ENCODE measurements at regions of chr15 and their contacts with region 1.

Region 1: GRCh38 chr15:40782580-40783227 is 12.9 kb downstream of the C15orf62 start:
- DNase-seq: peak; percentile 69 to 85 (median 71)
- H3K4me3 ChIP-seq: no peak overlapping the region
- H3K4me3 Mint-ChIP-seq: no peak overlapping the region
- H3K27ac ChIP-seq: no peak overlapping the region
- H3K27ac Mint-ChIP-seq: peak overlapping the region in 4 of 8 donors; percentile 6 to 87 (median 40)
- H3K4me1 ChIP-seq: peaks cover 12% of the 10 kb centered on the region
- H3K4me1 Mint-ChIP-seq: peaks cover 14 to 24% (median 19%) of the 10 kb centered on the region in 3 donors
- H3K27me3 ChIP-seq: no peaks in the 10 kb centered on the region
- H3K27me3 Mint-ChIP-seq: peaks cover 0 to 2% of the 10 kb centered on the region in 2 donors

Region 2: DNA sequence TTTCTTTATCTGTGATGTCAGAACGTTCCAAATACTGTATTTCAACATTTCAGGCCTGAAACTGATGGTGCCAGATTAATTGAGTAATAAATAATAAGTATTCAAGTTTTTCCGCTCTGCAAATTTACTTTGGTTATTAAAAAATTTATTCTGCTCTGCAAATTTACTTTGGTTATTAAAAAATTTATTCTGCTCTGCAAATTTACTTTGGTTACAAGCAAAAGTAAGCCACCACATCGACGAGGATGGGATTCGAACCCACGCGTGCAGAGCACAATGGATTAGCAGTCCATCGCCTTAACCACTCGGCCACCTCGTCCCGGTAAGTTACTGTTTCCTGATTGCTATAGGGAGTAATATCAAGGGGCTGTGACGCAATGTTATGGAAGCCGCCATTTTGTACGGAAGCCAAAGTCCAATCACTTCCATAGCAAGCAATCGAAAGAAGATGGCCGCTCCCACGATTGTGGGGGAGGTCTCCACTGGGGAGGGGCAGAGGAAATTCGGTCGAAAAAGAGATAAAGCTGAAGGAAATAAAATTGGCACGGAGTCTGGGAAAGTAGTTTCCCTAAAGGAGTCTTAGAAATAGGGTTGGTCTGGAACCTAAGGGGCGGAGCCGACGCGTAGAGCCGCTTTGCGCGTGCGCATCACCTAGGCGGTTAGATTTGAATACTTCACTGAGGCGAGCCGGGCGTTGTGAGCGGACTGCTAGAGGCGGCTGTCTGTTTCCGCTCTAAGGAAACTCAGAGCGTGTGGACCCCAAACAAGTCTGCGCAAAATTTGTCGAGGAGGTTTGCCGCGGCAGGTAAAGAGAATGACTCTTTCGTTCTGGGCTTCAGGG is 188.9 kb before region 1 on chr15 and contains the start of gene KNL1:
- CTCF ChIA-PET with region 1: interaction called, 16 read pairs
- POLR2A ChIA-PET with region 1: no interaction called
- DNase-seq: peak; percentile 81 to 92 (median 89)
- H3K4me3 ChIP-seq: peak within 1 kb of the TSS; percentile 84
- H3K4me3 Mint-ChIP-seq: peak within 1 kb of the TSS; percentile 93 to 97 (median 95)
- H3K27ac ChIP-seq: peak within 1 kb of the TSS; percentile 90
- H3K27ac Mint-ChIP-seq: peak within 1 kb of the TSS; percentile 95 to 100 (median 98)
- H3K4me1 ChIP-seq: peaks cover 8% of the 10 kb centered on the region
- H3K4me1 Mint-ChIP-seq: peaks cover 33 to 41% (median 37%) of the 10 kb centered on the region in 3 donors
- H3K27me3 ChIP-seq: no peaks in the 10 kb centered on the region
- H3K27me3 Mint-ChIP-seq: peaks cover 2 to 7% of the 10 kb centered on the region in 2 donors
- total RNA-seq, gene KNL1: 19.2 to 19.5 TPM

Region 3: GRCh38 chr15:40684381-40684780 is 98.3 kb before region 1 on chr15:
- CTCF ChIA-PET with region 1: interaction called, 65 read pairs
- POLR2A ChIA-PET with region 1: no interaction called
- DNase-seq: no peak
- H3K4me3 ChIP-seq: no peak overlapping the region
- H3K4me3 Mint-ChIP-seq: no peak overlapping the region
- H3K27ac ChIP-seq: no peak overlapping the region
- H3K27ac Mint-ChIP-seq: peak overlapping the region in 1 of 8 donors; percentile 68
- H3K4me1 ChIP-seq: no peaks in the 10 kb centered on the region
- H3K4me1 Mint-ChIP-seq: peaks cover 0 to under 1% (median 0%) of the 10 kb centered on the region in 3 donors
- H3K27me3 ChIP-seq: no peaks in the 10 kb centered on the region
- H3K27me3 Mint-ChIP-seq: no peaks in the 10 kb centered on the region

Region 4: DNA sequence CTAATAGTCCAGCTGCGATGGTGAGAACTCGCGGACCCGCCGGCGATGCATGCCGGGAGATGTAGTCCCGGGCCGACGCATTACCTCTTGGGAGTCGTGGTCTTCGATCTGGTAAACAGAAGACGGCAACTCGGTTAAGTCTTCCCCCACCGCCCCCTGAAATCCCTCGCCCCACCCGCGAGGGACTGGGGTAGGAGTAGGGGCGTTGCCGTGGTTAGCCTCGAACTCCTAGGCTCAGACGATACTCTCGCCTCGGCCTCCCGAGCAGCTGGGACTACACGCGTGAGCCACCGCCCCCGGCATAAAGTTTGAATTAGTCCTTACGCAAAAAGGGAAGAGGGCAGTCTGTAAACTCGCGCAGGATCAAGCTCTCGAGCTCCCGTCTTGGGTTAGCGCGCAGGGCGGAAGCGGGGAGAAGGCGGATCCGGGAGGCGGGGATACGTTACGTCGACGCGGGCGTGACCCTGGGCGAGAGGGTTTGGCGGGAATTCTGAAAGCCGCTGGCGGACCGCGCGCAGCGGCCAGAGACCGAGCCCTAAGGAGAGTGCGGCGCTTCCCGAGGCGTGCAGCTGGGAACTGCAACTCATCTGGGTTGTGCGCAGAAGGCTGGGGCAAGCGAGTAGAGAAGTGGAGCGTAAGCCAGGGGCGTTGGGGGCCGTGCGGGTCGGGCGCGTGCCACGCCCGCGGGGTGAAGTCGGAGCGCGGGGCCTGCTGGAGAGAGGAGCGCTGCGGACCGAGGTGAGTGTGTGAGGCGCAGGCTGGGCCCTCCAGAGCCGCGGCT is 87.8 kb before region 1 on chr15 and contains the start of gene RAD51:
- CTCF ChIA-PET with region 1: interaction called, 14 read pairs
- POLR2A ChIA-PET with region 1: interaction called, 3 read pairs
- DNase-seq: peak; percentile 86 to 94 (median 90)
- H3K4me3 ChIP-seq: peak within 1 kb of the TSS; percentile 96
- H3K4me3 Mint-ChIP-seq: peak within 1 kb of the TSS; percentile 92 to 99 (median 96)
- H3K27ac ChIP-seq: peak within 1 kb of the TSS; percentile 98
- H3K27ac Mint-ChIP-seq: peak within 1 kb of the TSS; percentile 91 to 99 (median 98)
- H3K4me1 ChIP-seq: peaks cover 8% of the 10 kb centered on the region
- H3K4me1 Mint-ChIP-seq: peaks cover 19 to 28% (median 20%) of the 10 kb centered on the region in 3 donors
- H3K27me3 ChIP-seq: no peaks in the 10 kb centered on the region
- H3K27me3 Mint-ChIP-seq: no peaks in the 10 kb centered on the region
- total RNA-seq, gene RAD51: 54.3 to 57.6 TPM

Region 5: GRCh38 chr15:40751745-40752144 is 31.0 kb before region 1 on chr15:
- CTCF ChIA-PET with region 1: interaction called, 11 read pairs
- POLR2A ChIA-PET with region 1: interaction called, 6 read pairs
- DNase-seq: no peak
- H3K4me3 ChIP-seq: no peak overlapping the region
- H3K4me3 Mint-ChIP-seq: peak overlapping the region in 1 of 7 donors; percentile 56
- H3K27ac ChIP-seq: peak overlapping the region; percentile 27
- H3K27ac Mint-ChIP-seq: peak overlapping the region in 1 of 8 donors; percentile 89
- H3K4me1 ChIP-seq: peaks cover 15% of the 10 kb centered on the region
- H3K4me1 Mint-ChIP-seq: peaks cover 19 to 34% (median 33%) of the 10 kb centered on the region in 3 donors
- H3K27me3 ChIP-seq: no peaks in the 10 kb centered on the region
- H3K27me3 Mint-ChIP-seq: no peaks in the 10 kb centered on the region

Region 6: DNA sequence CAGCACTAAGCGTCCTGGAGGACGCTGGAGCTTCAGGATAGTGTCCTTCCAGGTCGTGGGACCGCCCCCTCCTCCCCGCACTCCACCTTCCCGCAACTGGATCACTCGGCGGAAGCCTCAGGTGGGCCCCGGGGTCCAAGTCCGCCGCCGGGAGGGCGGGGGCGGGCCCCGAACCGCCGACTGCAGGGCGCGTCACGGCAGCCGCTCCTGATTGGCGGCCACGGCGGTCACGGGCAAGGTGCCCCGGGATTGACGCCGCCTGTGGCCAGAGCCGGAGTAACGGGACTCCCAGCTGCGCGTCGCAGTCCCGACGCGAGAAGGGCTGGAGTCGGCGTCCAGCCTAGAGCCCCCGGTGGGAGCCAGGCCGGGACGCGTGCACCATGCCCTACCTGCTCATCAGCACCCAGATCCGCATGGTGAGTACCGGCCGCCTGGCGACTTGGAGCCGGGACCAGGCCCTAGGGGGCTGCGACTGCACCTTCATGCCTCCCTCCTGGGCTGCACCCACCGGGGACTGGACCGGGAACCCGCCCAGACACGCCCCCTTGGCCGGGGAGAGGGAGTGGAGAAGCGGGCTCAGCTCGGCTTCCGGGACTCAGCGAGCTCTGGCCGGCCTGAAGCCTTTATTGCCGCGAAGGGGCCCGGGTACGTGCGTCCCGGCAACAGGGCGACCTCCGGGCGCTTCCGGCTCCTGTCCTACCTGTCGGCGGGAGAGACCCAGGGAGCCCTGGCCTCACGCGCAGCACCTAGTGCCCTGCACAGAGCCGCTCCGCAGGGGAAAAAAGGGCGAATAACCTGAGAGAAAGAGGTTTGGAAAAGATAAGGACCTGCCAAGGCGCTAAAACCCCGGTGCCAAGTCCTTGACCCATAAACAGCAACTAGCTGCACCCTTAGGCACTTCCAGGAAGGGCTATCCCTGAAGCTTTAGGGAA is 18.6 kb before region 1 on chr15 and contains the start of gene GCHFR:
- CTCF ChIA-PET with region 1: interaction called, 45 read pairs
- POLR2A ChIA-PET with region 1: interaction called, 3 read pairs
- DNase-seq: peak; percentile 61 to 80 (median 66)
- H3K4me3 ChIP-seq: peak within 1 kb of the TSS; percentile 74
- H3K4me3 Mint-ChIP-seq: peak within 1 kb of the TSS; percentile 86 to 95 (median 90)
- H3K27ac ChIP-seq: peak within 1 kb of the TSS; percentile 66
- H3K27ac Mint-ChIP-seq: peak within 1 kb of the TSS; percentile 80 to 98 (median 96)
- H3K4me1 ChIP-seq: peaks cover 32% of the 10 kb centered on the region
- H3K4me1 Mint-ChIP-seq: peaks cover 21 to 44% (median 28%) of the 10 kb centered on the region in 3 donors
- H3K27me3 ChIP-seq: no peaks in the 10 kb centered on the region
- H3K27me3 Mint-ChIP-seq: no peaks in the 10 kb centered on the region
- total RNA-seq, gene GCHFR: 19.5 to 21.5 TPM

Region 7: DNA sequence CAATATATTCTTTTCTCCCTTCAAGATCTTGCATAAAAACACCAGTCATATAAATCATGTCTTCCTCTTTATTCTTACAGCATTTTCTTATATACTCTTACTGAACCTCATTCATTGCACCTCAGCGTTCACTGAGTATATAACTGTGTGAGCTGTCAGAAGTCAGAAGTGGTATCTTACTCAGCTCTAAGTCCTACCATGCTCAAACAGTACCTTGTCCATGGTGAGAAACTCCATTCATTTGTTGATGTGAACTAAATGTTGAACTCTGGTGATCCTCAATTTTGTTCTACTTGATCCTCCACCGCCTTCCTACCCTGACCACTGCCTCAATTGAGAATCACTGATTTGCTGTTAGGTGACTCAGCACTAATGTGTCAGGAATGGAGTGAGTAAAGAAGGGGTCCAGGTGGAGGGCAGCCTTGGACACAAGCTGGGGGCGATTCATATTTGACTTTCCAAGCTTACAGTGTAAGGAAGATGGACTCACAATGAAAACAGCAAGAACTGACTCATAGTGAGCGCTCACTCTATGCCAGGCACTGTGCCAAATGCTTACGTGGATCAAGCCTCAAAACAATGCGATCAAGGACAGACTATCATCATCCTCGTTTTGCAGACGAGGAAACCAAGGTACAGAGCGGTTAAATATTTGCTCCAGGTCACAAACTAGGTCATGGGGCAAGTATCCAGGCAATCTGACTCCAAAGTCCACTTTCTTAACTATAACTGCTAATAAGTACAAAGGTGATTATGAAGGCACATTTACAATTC is 10.7 kb after region 1 on chr15:
- CTCF ChIA-PET with region 1: interaction called, 12 read pairs
- POLR2A ChIA-PET with region 1: no interaction called
- DNase-seq: peak in 1 of 5 donors; percentile 9
- H3K4me3 ChIP-seq: no peak overlapping the region
- H3K4me3 Mint-ChIP-seq: no peak overlapping the region
- H3K27ac ChIP-seq: no peak overlapping the region
- H3K27ac Mint-ChIP-seq: peak overlapping the region in 3 of 8 donors; percentile 26 to 46 (median 41)
- H3K4me1 ChIP-seq: no peaks in the 10 kb centered on the region
- H3K4me1 Mint-ChIP-seq: peaks cover 22 to 29% (median 27%) of the 10 kb centered on the region in 3 donors
- H3K27me3 ChIP-seq: no peaks in the 10 kb centered on the region
- H3K27me3 Mint-ChIP-seq: no peaks in the 10 kb centered on the region